BJ (cell line): ENCODE measurements at regions of chr21 and their contacts with region 1.

Region 1: DNA sequence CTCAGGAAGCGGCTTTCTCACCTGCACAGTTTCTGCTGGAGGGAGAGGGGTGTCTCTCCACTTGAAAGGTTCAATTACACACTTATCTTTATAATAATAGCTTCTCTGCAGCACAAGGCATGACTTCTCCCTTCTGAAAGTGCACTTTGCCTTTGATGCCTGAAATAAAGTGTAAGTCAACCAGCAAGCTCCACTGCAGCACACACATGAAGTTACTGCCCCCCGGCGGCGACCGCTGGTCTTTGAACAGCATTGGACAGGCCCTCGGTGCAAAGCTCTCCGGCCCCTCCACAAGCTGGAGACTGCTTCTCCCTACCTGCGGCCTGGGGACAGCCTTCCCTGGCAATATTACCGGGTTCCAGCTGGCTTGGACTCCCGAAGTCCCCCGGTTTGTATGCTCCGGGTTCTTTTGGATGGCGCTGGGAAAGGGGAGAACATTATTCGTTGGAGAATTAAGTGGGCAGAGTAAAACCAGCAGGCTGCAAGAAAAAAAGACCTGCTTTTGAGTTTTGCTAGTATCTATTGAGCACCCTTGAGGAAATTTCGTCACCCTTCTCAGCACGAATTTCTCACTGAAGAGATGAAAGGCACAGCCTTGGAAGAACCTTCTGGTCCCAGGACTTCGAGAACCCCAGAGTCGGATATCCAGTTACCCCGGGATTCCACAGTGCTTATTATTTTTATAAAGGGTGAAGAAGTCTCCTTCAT is 11.8 kb downstream of the RCAN1 start:
- DNase-seq: no peak
- H3K4me3 ChIP-seq: no peak overlapping the region
- H3K27me3 ChIP-seq: no peaks in the 10 kb centered on the region
- CTCF ChIP-seq: peak; percentile 86

Region 2: DNA sequence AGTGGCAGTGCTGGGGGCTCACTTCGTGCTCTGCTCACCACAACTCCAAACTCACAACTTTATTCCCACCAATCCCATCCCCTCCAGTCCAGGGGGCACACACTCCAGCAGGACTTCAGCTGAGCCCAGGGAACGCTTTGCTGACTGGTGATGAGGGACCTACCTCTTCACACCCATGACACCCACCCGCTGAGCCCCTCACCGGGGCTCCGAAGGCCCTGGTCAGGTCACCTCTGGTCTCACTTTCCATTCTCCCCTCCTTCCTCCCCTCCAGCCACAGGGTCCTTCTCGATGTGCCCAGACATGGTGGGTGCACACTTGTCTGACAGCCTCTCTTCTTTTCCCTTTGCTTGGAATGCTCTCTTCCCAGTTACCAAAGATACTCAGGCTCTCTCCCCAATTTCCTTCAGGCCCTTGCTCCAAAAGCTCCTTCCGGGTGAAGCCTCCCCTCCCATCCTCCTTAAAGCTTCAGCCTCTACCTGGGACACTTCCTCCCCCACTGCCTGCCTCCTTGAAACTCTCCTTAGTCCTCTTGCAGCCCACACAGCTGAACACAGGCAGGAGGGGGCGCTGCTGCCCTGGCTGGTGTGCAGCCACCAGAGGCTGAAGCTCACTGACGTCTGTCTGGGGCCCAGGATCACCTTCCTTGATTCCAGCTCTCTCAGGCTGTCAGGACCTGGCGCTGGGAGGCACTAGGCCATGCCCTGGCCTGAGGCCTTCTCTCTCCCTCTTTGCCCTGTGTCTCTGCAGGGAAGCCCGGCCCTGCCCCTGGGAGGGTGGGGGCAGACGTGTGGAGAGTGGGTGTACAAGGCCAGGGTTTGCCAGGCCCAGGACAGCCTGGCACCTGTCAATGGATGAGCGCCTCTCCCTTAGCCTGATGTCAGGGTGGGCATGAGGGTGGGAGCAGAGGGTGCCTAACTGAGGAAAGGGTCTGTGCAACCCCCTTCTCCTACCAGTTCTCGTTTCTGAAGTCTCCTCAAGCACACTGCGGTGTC is 92.7 kb before region 1 on chr21:
- CTCF ChIA-PET with region 1: interaction called, 237 read pairs
- POLR2A ChIA-PET with region 1: no interaction called
- DNase-seq: no peak
- H3K4me3 ChIP-seq: no peak overlapping the region
- H3K27me3 ChIP-seq: no peaks in the 10 kb centered on the region
- CTCF ChIP-seq: peak; percentile 87

Region 3: DNA sequence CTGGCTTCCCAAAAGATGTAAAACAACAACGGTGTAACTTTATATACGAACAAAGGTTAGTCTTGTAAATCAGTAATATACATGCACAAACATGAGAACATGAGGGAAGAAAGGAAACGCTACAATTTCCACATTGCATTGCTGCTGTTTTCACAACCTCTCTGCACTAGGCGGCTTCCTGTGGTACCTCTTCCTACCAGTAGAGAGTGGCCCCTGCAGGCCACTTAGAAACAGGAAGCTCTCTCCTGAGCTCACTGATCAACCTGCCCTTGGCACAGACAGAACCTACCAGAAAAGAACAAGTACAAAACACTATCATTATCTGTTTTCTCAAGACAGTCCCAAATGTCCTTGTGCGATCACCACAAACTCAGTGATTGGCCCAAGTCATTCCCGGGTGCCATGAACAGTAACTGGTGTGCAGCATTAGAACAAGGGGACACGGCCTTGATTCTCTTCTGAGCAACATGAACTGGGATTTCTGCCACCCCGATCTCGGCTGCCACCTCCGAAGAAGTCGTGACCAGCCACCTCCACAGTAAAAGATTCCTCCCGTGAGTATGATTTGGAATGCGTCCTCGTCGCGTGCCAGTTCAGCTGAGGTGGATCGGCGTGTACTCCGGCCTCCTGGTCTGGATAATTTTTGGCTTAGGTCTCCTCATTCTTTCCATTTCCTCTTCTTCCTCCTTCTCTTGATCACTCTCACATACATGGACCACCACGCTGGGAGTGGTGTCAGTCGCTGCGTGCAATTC is 85.5 kb before region 1 on chr21:
- CTCF ChIA-PET with region 1: interaction called, 24 read pairs
- POLR2A ChIA-PET with region 1: no interaction called
- DNase-seq: no peak
- H3K4me3 ChIP-seq: no peak overlapping the region
- H3K27me3 ChIP-seq: no peaks in the 10 kb centered on the region
- CTCF ChIP-seq: peak; percentile 31

Region 4: GRCh38 chr21:34582506-34583150 is 20.5 kb before region 1 on chr21:
- CTCF ChIA-PET with region 1: interaction called, 32 read pairs
- POLR2A ChIA-PET with region 1: no interaction called
- DNase-seq: no peak
- H3K4me3 ChIP-seq: no peak overlapping the region
- H3K27me3 ChIP-seq: no peaks in the 10 kb centered on the region
- CTCF ChIP-seq: peak; percentile 61

Region 5: GRCh38 chr21:34592120-34592955 is 10.8 kb before region 1 on chr21:
- CTCF ChIA-PET with region 1: interaction called, 26 read pairs
- POLR2A ChIA-PET with region 1: no interaction called
- DNase-seq: no peak
- H3K4me3 ChIP-seq: no peak overlapping the region
- H3K27me3 ChIP-seq: no peaks in the 10 kb centered on the region
- CTCF ChIP-seq: no peak

Region 6: GRCh38 chr21:34614633-34615486 is 11.7 kb after region 1 on chr21 and contains the start of gene RCAN1:
- CTCF ChIA-PET with region 1: interaction called, 20 read pairs
- POLR2A ChIA-PET with region 1: no interaction called
- DNase-seq: peak; percentile 56
- H3K4me3 ChIP-seq: peak within 1 kb of the TSS; percentile 76
- H3K27me3 ChIP-seq: peaks cover 4% of the 10 kb centered on the region
- CTCF ChIP-seq: no peak
- polyA plus RNA-seq, gene RCAN1: 56.2 and 91.8 TPM in 2 replicates

Region 7: DNA sequence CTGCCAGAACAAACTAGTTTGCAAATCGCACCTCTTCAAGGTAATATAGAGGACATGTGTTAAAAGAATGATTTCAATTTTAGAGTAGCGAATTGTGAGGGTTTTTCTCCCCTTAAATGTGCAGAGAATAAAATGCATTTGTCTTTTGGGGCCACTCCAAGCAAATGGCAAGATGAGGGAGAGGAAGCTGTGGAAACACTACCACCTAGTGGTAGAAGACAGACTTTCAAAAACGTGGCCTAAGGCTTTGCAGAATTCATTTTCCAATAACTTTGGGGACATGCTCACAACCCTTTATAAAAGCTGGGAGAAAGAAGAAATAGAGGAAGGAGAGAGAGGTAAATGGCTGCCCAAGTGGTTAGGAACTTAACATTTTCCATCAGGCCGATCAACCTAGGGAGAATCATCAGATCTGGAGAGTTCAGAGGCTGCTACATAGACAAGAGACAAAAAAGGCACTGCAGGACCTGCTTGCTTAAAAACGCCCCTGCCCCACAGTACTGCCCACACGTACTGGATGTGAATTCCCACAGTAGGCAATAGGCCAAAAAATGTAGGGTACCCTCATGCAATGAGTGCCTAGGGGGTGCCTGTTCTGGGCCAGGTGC is 27.5 kb after region 1 on chr21:
- CTCF ChIA-PET with region 1: interaction called, 11 read pairs
- POLR2A ChIA-PET with region 1: no interaction called
- DNase-seq: no peak
- H3K4me3 ChIP-seq: no peak overlapping the region
- H3K27me3 ChIP-seq: peaks cover 21% of the 10 kb centered on the region
- CTCF ChIP-seq: peak; percentile 72